GM10248 (cell line): ENCODE measurements at regions of chr18 and their contacts with region 1.

Region 1: GRCh38 chr18:46173393-46174341 is 69.5 kb downstream of the HAUS1 start:
- DNase-seq: peak; percentile 95
- CTCF ChIP-seq: peak; percentile 91

Region 2: GRCh38 chr18:45856531-45856930 is 317.1 kb before region 1 on chr18:
- CTCF ChIA-PET with region 1: no interaction called
- POLR2A ChIA-PET with region 1: no interaction called
- DNase-seq: no peak
- CTCF ChIP-seq: no peak

Region 3: GRCh38 chr18:46141199-46141598 is 32.5 kb before region 1 on chr18:
- CTCF ChIA-PET with region 1: interaction called, 47 read pairs
- POLR2A ChIA-PET with region 1: no interaction called
- DNase-seq: no peak
- CTCF ChIP-seq: no peak

Region 4: DNA sequence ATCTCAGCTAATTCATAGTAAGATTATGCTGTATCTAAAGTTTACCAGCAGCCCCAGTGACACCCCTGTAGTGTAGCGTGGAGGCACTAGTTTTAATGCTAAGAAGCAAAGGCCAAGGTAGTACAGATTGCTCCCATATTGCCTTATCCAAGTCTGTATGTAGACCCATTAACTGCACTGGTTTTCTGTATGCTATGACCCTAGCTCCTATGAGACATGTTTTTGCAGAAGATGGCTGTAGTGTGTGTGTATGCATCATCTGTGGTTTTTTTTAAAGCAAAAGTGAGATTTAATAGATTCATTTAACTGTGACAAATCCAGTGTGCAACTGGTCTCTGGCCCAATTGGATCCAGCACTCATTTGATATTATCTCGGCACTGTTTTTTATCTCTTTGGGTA is 17.0 kb after region 1 on chr18:
- CTCF ChIA-PET with region 1: interaction called, 63 read pairs
- POLR2A ChIA-PET with region 1: interaction called, 3 read pairs
- DNase-seq: no peak
- CTCF ChIP-seq: no peak

Region 5: DNA sequence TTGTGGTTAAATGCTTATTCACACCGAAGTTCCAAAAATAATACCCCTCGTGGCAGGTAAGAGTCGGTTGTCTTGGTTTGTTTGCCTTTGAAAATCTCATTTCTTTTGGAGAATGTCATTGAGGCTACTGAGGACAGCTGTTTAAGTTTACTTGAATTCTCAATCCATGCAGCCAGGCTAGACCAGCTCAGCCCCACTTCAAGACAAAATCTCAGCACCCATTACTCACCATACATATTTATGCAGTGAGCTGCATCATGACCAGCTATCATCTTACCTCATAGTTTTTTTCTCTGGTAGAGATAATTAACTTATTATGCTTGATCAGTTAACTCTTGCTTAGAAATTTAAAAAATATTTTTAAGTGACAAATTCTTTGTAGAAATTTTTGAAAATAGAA is 46.4 kb after region 1 on chr18:
- CTCF ChIA-PET with region 1: interaction called, 37 read pairs
- POLR2A ChIA-PET with region 1: no interaction called
- DNase-seq: no peak
- CTCF ChIP-seq: no peak

Region 6: DNA sequence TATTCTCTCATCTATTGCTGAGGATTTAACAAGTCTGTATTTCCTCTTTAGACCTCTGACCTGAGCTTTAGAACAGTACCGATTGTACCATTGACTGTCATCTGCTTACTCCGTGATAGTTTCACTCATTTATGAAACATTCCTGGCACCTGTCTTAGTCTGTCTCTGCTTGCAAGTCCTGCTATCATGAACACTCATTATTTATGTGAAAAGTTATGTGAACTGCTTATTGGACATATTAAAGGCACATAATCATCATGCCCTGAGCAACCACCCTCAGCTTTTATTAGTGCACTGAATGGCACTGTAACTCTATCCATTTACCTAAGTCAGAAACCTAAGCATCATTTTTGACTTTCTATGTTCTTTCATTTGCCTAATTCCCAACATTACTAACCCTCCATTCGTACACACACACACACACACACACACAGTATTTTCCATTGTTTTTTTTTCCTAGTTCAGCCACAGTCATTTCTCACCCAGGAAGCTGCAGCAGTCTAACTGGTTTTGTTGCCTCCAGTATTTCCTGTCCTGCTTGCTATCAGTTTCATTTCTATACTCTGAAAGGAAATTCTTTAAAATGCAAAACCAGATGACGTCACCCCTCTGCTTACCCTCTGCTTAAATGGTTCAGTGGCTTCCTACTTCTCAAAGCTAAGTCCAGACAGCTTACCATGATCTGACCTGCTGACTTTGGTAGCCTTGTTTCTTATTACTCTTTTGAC is 76.6 kb after region 1 on chr18:
- CTCF ChIA-PET with region 1: interaction called, 19 read pairs
- POLR2A ChIA-PET with region 1: interaction called, 9 read pairs
- DNase-seq: peak; percentile 84
- CTCF ChIP-seq: no peak